Prostate gland (tissue), 2 donors: ENCODE measurements at regions of chr9 and their contacts with region 1.

Region 1: GRCh38 chr9:107172160-107172978 is 110.7 kb upstream of the RAD23B start:
- DNase-seq: peak; percentile 72
- H3K4me3 ChIP-seq: no peak overlapping the region
- H3K27ac ChIP-seq: no peak overlapping the region
- H3K4me1 ChIP-seq: no peaks in the 10 kb centered on the region
- H3K27me3 ChIP-seq: no peaks in the 10 kb centered on the region
- CTCF ChIP-seq: peak; percentile 71 to 87 (median 85)
- POLR2A ChIP-seq: no peak

Region 2: GRCh38 chr9:105842023-105842644 is 1330.2 kb before region 1 on chr9:
- intact Hi-C with region 1: loop called (anchors 5 kb)
- DNase-seq: no peak
- H3K4me3 ChIP-seq: no peak overlapping the region
- H3K27ac ChIP-seq: no peak overlapping the region
- H3K4me1 ChIP-seq: no peaks in the 10 kb centered on the region
- H3K27me3 ChIP-seq: peaks cover 3% of the 10 kb centered on the region
- CTCF ChIP-seq: peak; percentile 51 to 74 (median 62)
- POLR2A ChIP-seq: no peak

Region 3: GRCh38 chr9:106670423-106670822 is 501.9 kb before region 1 on chr9:
- intact Hi-C with region 1: loop called (anchors 5 kb)
- DNase-seq: peak; percentile 84
- H3K4me3 ChIP-seq: no peak overlapping the region
- H3K27ac ChIP-seq: no peak overlapping the region
- H3K4me1 ChIP-seq: no peaks in the 10 kb centered on the region
- H3K27me3 ChIP-seq: no peaks in the 10 kb centered on the region
- CTCF ChIP-seq: peak in 1 of 4 experiments; percentile 30
- POLR2A ChIP-seq: no peak